ENCODE measurements at regions of chr10 and their contacts with region 1.

Region 1: GRCh38 chr10:62816331-62817120 is at the start of gene EGR2:
- DNase-seq: peak; percentile 95
- H3K4me3 ChIP-seq: peak within 1 kb of the TSS; percentile 74
- H3K27ac ChIP-seq: peak within 1 kb of the TSS; percentile 60
- H3K4me1 ChIP-seq: peaks cover 16% of the 10 kb centered on the region
- CTCF ChIP-seq: no peak
- total RNA-seq, gene EGR2: 0.08 TPM in 1 of 2 replicates, not detected in the other

Region 2: DNA sequence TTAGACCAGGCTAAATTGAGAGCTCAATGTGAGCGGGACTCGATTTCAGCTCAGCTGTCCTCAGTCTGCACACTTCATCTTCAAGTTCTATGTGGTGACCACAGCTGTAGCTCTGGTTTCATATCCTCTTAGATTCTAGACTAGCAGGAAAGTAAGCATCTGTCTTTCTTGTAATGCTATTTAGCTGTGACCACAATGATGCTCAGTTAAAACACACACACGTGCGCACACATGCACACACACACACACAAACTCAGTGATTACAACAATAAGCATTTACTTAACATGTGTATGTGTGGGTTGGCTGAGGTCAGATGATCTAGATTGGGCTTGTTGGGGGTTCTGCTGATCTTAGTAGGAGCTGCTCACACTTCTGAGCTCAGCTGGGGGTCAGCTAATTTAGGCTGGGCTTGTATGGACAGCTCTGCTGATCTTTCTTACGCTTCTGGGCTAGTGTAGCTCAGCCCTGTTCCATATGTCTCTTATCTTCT is 359.9 kb before region 1 on chr10:
- CTCF ChIA-PET with region 1: no interaction called
- POLR2A ChIA-PET with region 1: interaction called, 6 read pairs
- intact Hi-C with region 1: loop called (anchors 5 kb)
- DNase-seq: peak; percentile 97
- H3K4me3 ChIP-seq: peak overlapping the region; percentile 14
- H3K27ac ChIP-seq: peak overlapping the region; percentile 80
- H3K4me1 ChIP-seq: peaks cover 49% of the 10 kb centered on the region
- CTCF ChIP-seq: no peak

Region 3: DNA sequence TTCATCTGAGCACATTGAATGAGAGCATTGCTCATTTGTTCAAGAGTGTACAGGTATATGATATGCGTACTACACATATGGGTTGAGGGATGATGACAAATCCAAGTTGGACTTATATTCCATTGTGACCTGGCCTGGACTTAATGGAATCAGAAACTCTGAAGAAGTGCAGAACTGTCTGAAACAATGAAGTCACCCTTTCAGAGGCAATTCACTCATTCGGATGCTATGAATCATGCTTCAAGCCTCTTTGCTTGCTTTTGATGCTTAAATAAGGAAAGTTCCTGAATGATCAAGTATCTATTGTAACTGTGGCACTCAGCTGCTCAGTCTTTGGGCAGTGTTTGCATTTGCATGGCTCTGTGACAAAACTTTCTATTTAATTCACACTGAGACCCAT is 349.0 kb before region 1 on chr10:
- CTCF ChIA-PET with region 1: no interaction called
- POLR2A ChIA-PET with region 1: no interaction called
- intact Hi-C with region 1: no loop called
- DNase-seq: no peak
- H3K4me3 ChIP-seq: no peak overlapping the region
- H3K27ac ChIP-seq: no peak overlapping the region
- H3K4me1 ChIP-seq: no peaks in the 10 kb centered on the region
- CTCF ChIP-seq: no peak

Region 4: GRCh38 chr10:62610649-62611229 is 205.8 kb before region 1 on chr10:
- CTCF ChIA-PET with region 1: interaction called, 9 read pairs
- POLR2A ChIA-PET with region 1: interaction called, 6 read pairs
- intact Hi-C with region 1: loop called (anchors 1 kb)
- DNase-seq: peak; percentile 91
- H3K4me3 ChIP-seq: no peak overlapping the region
- H3K27ac ChIP-seq: no peak overlapping the region
- H3K4me1 ChIP-seq: peaks cover 19% of the 10 kb centered on the region
- CTCF ChIP-seq: peak; percentile 99

Region 5: DNA sequence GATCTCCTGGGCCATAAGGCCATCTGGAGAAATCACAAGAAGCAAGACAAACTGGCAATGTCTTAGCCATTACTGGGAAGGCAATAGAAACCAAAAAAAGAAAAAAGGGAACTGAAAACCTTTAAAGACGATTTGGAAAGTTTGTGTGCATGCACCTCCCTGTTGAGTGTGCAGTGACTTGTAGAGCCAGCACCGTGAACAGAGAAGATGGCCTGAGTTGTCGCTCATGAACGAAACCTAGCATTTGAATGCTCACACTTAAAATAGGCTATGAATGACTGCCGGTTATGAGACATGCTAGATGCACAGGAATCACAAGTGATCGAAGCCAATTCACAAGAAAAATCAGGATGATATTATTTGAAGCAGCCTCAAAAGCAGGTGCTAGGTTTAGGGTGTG is 163.3 kb before region 1 on chr10:
- CTCF ChIA-PET with region 1: interaction called, 7 read pairs
- POLR2A ChIA-PET with region 1: no interaction called
- intact Hi-C with region 1: loop called (anchors 1 kb)
- DNase-seq: peak; percentile 99
- H3K4me3 ChIP-seq: peak overlapping the region; percentile 42
- H3K27ac ChIP-seq: peak overlapping the region; percentile 96
- H3K4me1 ChIP-seq: peaks cover 74% of the 10 kb centered on the region
- CTCF ChIP-seq: no peak

Region 6: GRCh38 chr10:63083904-63084689 is 267.6 kb after region 1 on chr10:
- CTCF ChIA-PET with region 1: no interaction called
- POLR2A ChIA-PET with region 1: no interaction called
- intact Hi-C with region 1: loop called (anchors 5 kb)
- DNase-seq: peak; percentile 74
- H3K4me3 ChIP-seq: no peak overlapping the region
- H3K27ac ChIP-seq: no peak overlapping the region
- H3K4me1 ChIP-seq: no peaks in the 10 kb centered on the region
- CTCF ChIP-seq: peak; percentile 85